ENCODE measurements at regions of chr10 and their contacts with region 1.

Region 1: GRCh38 chr10:63166742-63167258 is 33.7 kb downstream of the NRBF2 start:
- DNase-seq: no peak
- H3K4me3 ChIP-seq: no peak overlapping the region
- H3K27ac ChIP-seq: peak overlapping the region in 2 of 8 donors; percentile 4 to 15
- H3K4me1 ChIP-seq: peaks cover 0 to 31% (median 3%) of the 10 kb centered on the region in 6 donors
- H3K27me3 ChIP-seq: no peaks in the 10 kb centered on the region
- CTCF ChIP-seq: peak; percentile 63 to 86 (median 73)
- POLR2A ChIP-seq: no peak

Region 2: DNA sequence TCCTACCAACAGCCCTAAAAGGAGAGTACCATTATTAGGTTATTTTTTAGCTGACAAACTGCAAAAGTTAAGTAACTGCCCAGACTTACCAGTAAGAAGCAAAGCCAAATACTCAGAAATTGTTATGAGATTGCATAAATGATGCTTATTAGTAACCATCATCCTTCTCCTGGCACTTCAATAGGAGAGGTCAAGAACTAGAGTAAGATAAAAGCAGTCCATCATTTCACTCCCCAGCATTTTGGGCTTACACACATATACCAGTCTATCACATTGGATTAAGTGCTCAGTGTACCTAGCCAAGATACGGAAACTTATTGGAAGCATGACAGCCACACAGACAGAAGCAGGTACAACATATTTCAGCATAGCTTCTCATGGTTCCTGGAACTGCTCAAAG is 207.8 kb before region 1 on chr10:
- intact Hi-C with region 1: no loop called
- DNase-seq: no peak
- H3K4me3 ChIP-seq: no peak overlapping the region
- H3K27ac ChIP-seq: no peak overlapping the region
- H3K4me1 ChIP-seq: no peaks in the 10 kb centered on the region
- H3K27me3 ChIP-seq: peaks cover 0 to 3% (median 0%) of the 10 kb centered on the region in 7 donors
- CTCF ChIP-seq: no peak
- POLR2A ChIP-seq: no peak

Region 3: GRCh38 chr10:63003816-63004453 is 162.9 kb before region 1 on chr10:
- intact Hi-C with region 1: no loop called
- DNase-seq: no peak
- H3K4me3 ChIP-seq: no peak overlapping the region
- H3K27ac ChIP-seq: no peak overlapping the region
- H3K4me1 ChIP-seq: no peaks in the 10 kb centered on the region
- H3K27me3 ChIP-seq: no peaks in the 10 kb centered on the region
- CTCF ChIP-seq: peak in 6 of 11 experiments; percentile 13 to 33 (median 25)
- POLR2A ChIP-seq: no peak

Region 4: GRCh38 chr10:63456437-63457210 is 289.8 kb after region 1 on chr10:
- intact Hi-C with region 1: no loop called
- DNase-seq: no peak
- H3K4me3 ChIP-seq: no peak overlapping the region
- H3K27ac ChIP-seq: no peak overlapping the region
- H3K4me1 ChIP-seq: peaks cover 0 to 17% (median 0%) of the 10 kb centered on the region in 6 donors
- H3K27me3 ChIP-seq: no peaks in the 10 kb centered on the region
- CTCF ChIP-seq: no peak
- POLR2A ChIP-seq: no peak

Region 5: DNA sequence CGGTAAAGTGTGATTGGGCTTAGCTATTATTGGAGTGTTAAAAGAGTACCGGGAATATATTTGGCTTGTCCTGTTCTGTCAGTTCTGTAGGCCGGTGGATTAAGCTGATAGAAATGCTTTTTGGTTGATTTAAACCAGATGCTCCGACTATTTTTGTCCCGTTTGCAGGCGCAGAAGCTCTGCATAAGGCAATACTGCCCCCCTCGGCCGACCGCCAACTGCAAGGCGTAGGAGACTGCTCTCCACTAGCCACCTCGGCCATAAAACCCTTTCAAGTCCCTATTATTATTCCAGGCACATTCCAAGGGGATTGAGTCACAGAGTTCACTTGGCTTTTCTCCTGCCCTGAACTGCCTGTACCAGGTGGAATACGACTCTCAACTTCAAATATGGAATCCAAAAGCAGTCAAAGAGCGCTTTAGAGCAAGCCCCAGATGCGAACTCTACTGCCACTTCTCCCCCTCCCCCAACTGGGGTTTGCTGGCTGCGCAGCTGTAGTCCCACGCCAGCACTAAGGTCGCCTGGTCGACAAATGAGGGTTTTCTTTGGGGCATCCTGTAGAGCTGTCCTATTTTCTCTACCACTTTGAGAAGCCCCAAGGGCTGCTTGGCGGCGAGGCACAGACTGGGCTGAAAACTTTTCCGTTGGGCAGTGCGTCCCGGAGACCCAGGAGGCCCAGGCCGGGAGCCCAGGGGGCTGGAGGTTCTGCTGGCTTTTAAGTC is 462.7 kb after region 1 on chr10:
- intact Hi-C with region 1: no loop called
- DNase-seq: peak; percentile 96
- H3K4me3 ChIP-seq: peak overlapping the region; percentile 64 to 88 (median 75)
- H3K27ac ChIP-seq: peak overlapping the region; percentile 74 to 93 (median 88)
- H3K4me1 ChIP-seq: peaks cover 10 to 50% (median 38%) of the 10 kb centered on the region in 6 donors
- H3K27me3 ChIP-seq: no peaks in the 10 kb centered on the region
- CTCF ChIP-seq: peak; percentile 38 to 90 (median 83)
- POLR2A ChIP-seq: no peak

Region 6: GRCh38 chr10:63720072-63720537 is 553.3 kb after region 1 on chr10:
- intact Hi-C with region 1: loop called (anchors 5 kb)
- DNase-seq: no peak
- H3K4me3 ChIP-seq: no peak overlapping the region
- H3K27ac ChIP-seq: no peak overlapping the region
- H3K4me1 ChIP-seq: peaks cover 0 to 21% (median 7%) of the 10 kb centered on the region in 6 donors
- H3K27me3 ChIP-seq: peaks cover 0 to 13% (median 0%) of the 10 kb centered on the region in 7 donors
- CTCF ChIP-seq: peak; percentile 86 to 96 (median 93)
- POLR2A ChIP-seq: no peak

Measured in spleen (tissue), 13 donors.